ENCODE measurements at regions of chrX and their contacts with region 1.

Region 1: DNA sequence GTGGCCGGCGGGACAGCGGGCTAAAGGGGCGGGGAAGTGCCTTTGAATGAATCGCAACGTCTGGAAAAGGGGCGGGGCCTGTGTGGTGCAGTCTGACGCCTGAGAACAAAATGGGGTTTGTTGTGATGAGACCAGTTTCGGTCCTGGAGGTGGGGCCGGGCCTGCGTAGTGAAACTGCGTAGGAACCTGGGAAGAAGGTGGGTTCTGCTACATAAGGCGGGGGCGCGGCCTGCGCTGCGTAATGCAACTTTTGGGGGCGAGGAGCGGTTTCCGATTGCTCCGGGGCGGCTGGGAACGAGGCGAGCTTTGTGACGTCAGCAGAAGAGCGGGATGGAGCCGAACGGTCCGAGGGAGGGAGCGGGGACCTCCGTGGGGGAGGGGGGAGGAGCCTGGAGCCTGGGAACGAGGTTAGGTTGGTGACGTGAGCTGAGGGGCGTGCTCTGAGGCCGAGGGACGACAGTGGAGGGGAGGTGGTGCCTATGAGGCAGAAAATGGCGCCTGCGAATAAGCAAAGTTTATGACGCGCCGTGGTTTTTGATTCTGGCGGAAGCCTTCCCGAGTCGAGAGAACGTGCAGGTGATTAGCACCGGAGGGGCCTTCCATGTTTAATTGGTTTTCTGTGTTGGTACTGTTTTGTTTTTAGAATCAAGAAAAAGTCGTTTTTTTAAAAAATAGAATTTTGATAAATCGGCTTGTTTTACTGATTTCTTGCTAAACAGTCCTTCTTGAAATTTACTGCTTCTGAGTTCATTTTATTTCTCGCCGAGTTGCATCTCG is 716 bp downstream of the USP11 start:
- DNase-seq: peak; percentile 86 to 97
- ATAC-seq: peak; percentile 85 to 95 (median 85)
- H3K4me3 ChIP-seq: peak overlapping the region; percentile 70
- H3K4me3 Mint-ChIP-seq: peak overlapping the region; percentile 98
- H3K27ac ChIP-seq: peak overlapping the region; percentile 98
- H3K27ac Mint-ChIP-seq: peak overlapping the region; percentile 97 to 99
- H3K4me1 ChIP-seq: peaks cover 8% of the 10 kb centered on the region
- H3K4me1 Mint-ChIP-seq: peaks cover 17 to 20% of the 10 kb centered on the region in 2 donors
- H3K27me3 ChIP-seq: no peaks in the 10 kb centered on the region
- H3K27me3 Mint-ChIP-seq: no peaks in the 10 kb centered on the region
- CTCF ChIP-seq: no peak

Region 2: GRCh38 chrX:47217642-47218279 is 15.8 kb before region 1 on chrX:
- intact Hi-C with region 1: loop called (anchors 1 kb)
- DNase-seq: peak; percentile 85 to 96
- ATAC-seq: peak; percentile 77 to 91 (median 77)
- H3K4me3 ChIP-seq: peak overlapping the region; percentile 76
- H3K4me3 Mint-ChIP-seq: peak overlapping the region; percentile 94
- H3K27ac ChIP-seq: peak overlapping the region; percentile 100
- H3K27ac Mint-ChIP-seq: peak overlapping the region; percentile 95 to 98
- H3K4me1 ChIP-seq: peaks cover 25% of the 10 kb centered on the region
- H3K4me1 Mint-ChIP-seq: peaks cover 36 to 50% of the 10 kb centered on the region in 2 donors
- H3K27me3 ChIP-seq: no peaks in the 10 kb centered on the region
- H3K27me3 Mint-ChIP-seq: no peaks in the 10 kb centered on the region
- CTCF ChIP-seq: no peak

Measured in natural killer cell (primary cell).